Mammary epithelial cell (primary cell): ENCODE measurements at regions of chr17 and their contacts with region 1.

Region 1: GRCh38 chr17:64466019-64466685 is 17.2 kb downstream of the MILR1 start:
- DNase-seq: no peak
- H3K4me3 ChIP-seq: no peak overlapping the region
- H3K27ac ChIP-seq: no peak overlapping the region
- H3K4me1 ChIP-seq: no peaks in the 10 kb centered on the region
- H3K27me3 ChIP-seq: peaks cover 3% of the 10 kb centered on the region
- CTCF ChIP-seq: no peak

Region 2: DNA sequence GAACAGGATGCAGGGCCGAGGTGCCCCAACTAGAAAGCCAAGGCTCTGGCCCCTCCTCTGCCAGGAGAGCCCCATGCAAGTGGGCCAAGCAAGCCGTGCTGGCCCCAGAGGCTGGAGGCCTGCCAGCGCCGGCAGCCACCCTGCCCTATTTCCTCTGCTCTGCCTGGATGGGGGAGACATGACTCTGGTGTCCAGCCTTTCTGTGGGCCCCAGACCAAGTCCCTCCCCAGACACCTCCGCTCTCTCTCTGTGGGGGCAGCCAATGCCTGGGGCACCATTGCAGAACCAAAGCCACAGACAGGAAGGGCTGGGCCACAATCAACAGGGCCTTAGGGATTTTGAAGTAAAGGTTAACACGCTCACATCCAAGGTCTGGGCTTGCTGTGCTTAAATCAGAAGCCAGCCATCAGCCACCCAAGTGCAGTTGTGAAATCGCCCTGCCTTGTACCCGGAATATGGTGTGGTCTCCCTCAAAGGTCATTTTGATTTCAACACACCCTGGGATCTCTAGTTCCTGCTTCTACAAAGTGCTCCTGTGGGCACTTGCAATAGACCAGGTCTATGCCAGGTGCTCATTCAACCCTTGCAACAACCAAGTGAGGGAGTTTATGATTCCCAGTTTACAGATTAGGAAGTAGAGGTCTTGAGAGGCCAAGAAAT is 139.6 kb before region 1 on chr17:
- CTCF ChIA-PET with region 1: no interaction called
- dilution Hi-C with region 1: loop called (anchors 5 kb)
- in situ Hi-C with region 1: no loop called
- intact Hi-C with region 1: no loop called
- DNase-seq: peak; percentile 77
- H3K4me3 ChIP-seq: no peak overlapping the region
- H3K27ac ChIP-seq: no peak overlapping the region
- H3K4me1 ChIP-seq: peaks cover 17% of the 10 kb centered on the region
- H3K27me3 ChIP-seq: no peaks in the 10 kb centered on the region
- CTCF ChIP-seq: no peak

Region 3: GRCh38 chr17:64378890-64379354 is 87.2 kb before region 1 on chr17:
- CTCF ChIA-PET with region 1: no interaction called
- dilution Hi-C with region 1: loop called (anchors 10 kb)
- in situ Hi-C with region 1: no loop called
- intact Hi-C with region 1: no loop called
- DNase-seq: no peak
- H3K4me3 ChIP-seq: no peak overlapping the region
- H3K27ac ChIP-seq: no peak overlapping the region
- H3K4me1 ChIP-seq: no peaks in the 10 kb centered on the region
- H3K27me3 ChIP-seq: no peaks in the 10 kb centered on the region
- CTCF ChIP-seq: no peak

Region 4: GRCh38 chr17:64439956-64440355 is 26.2 kb before region 1 on chr17:
- CTCF ChIA-PET with region 1: no interaction called
- dilution Hi-C with region 1: no loop called
- in situ Hi-C with region 1: no loop called
- intact Hi-C with region 1: no loop called
- DNase-seq: no peak
- H3K4me3 ChIP-seq: no peak overlapping the region
- H3K27ac ChIP-seq: no peak overlapping the region
- H3K4me1 ChIP-seq: peaks cover 9% of the 10 kb centered on the region
- H3K27me3 ChIP-seq: no peaks in the 10 kb centered on the region
- CTCF ChIP-seq: no peak